AG04449 (cell line): ENCODE measurements at regions of chr11 and their contacts with region 1.

Region 1: GRCh38 chr11:10808553-10809372 is at the start of gene EIF4G2:
- DNase-seq: peak; percentile 86
- H3K4me3 ChIP-seq: peak within 1 kb of the TSS; percentile 90
- CTCF ChIP-seq: no peak

Region 2: DNA sequence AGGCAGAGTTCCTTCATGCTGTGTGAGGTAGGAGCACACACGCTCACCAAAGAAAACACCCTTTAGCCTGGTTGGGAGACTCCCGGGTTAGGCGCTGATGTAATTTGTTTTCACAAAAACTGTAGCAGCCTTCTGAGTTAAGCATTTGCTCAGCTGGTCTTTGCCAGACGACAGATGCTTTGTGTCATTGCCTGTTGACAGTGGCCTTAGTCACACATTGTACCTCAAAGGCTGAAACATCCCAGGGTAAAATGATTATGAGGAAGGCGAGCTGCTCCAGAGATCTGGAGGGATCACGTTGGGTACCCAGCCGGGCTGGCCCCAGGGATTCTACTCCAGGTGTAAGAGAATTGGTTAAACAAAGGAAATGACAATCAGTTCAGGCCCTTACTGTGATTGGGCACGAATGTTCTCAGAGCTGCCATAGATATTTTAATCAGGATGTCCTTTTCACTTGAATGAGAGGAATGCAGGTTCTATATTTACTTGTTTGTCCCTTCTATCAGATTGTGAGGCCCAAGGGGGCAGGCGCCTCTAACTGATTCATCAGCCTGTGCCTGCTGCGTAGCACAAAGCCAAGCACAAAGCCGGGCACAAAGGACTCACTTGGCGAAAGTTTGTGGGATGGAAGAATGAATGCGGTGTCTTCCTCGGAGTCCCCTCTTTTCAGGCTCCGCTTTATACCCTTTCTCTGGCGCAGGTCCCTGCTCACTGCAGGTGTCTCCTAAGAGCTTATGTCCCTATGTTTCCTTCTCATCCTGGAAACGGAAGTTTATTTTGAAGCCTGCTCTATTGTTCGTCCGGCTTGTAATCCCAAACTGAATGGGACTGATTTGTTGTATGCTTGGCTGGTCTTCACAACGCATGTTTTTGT is 456.8 kb before region 1 on chr11:
- CTCF ChIA-PET with region 1: no interaction called
- POLR2A ChIA-PET with region 1: no interaction called
- DNase-seq: peak; percentile 74
- H3K4me3 ChIP-seq: no peak overlapping the region
- CTCF ChIP-seq: no peak

Region 3: DNA sequence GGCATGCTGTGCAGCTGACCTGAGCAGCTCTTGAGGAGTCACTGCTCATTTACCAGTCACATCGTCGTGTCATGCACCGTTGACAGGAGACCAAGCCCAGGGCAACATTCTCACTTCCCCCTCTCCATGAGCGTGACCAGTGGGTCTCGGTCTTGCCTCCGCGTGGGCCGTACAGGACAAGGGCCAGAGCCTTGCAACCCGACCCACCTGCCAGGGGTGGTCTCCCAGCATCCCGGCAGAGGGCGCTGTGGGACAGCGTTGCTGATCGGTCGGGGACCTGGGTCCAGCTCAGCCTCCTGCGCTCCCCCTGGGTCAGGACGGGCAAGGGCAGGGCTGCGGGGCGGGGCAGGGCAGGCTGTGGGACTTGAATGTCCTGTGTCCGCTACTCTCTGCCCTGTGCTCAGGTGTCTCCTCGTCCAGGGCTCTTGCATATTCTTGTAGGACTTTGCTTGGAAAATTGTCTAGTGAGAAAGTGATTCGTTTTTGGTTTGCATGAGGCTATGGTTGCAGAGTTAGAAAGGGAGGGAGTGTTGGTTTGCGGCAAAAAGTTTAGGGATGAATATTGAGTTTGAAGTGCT is 16.3 kb before region 1 on chr11:
- CTCF ChIA-PET with region 1: interaction called, 61 read pairs
- POLR2A ChIA-PET with region 1: interaction called, 40 read pairs
- DNase-seq: no peak
- H3K4me3 ChIP-seq: no peak overlapping the region; the same call in 1 of the 2 replicates
- CTCF ChIP-seq: peak; percentile 99

Region 4: GRCh38 chr11:10844356-10844755 is 35.6 kb after region 1 on chr11:
- CTCF ChIA-PET with region 1: no interaction called
- POLR2A ChIA-PET with region 1: interaction called, 15 read pairs
- DNase-seq: no peak
- H3K4me3 ChIP-seq: no peak overlapping the region
- CTCF ChIP-seq: no peak

Region 5: DNA sequence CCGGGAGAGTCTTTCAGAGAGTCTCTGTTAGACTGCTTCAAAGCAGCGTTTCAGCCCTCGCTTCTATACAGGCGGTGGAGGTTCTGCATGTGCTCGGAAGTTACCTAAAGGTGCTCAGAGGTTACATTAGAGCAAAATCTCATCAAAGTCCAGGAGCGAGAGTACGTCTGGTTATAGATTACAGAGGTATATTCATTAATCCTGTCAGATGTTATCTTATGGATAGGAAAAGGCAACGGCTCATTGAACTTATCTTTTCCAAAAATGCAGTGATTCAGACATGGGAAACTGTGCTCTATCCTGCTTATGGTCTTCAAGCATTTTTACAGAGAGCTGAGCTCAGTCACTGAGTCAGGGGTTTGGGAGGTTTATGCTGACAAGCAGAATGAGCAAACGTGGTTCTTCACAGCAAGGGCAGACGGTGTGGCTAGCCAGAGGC is 58.1 kb after region 1 on chr11:
- CTCF ChIA-PET with region 1: no interaction called
- POLR2A ChIA-PET with region 1: interaction called, 10 read pairs
- DNase-seq: no peak
- H3K4me3 ChIP-seq: no peak overlapping the region
- CTCF ChIP-seq: no peak

Region 6: GRCh38 chr11:10906513-10906912 is 97.8 kb after region 1 on chr11:
- CTCF ChIA-PET with region 1: interaction called, 4 read pairs
- POLR2A ChIA-PET with region 1: interaction called, 86 read pairs
- DNase-seq: no peak
- H3K4me3 ChIP-seq: no peak overlapping the region
- CTCF ChIP-seq: peak; percentile 15

Region 7: DNA sequence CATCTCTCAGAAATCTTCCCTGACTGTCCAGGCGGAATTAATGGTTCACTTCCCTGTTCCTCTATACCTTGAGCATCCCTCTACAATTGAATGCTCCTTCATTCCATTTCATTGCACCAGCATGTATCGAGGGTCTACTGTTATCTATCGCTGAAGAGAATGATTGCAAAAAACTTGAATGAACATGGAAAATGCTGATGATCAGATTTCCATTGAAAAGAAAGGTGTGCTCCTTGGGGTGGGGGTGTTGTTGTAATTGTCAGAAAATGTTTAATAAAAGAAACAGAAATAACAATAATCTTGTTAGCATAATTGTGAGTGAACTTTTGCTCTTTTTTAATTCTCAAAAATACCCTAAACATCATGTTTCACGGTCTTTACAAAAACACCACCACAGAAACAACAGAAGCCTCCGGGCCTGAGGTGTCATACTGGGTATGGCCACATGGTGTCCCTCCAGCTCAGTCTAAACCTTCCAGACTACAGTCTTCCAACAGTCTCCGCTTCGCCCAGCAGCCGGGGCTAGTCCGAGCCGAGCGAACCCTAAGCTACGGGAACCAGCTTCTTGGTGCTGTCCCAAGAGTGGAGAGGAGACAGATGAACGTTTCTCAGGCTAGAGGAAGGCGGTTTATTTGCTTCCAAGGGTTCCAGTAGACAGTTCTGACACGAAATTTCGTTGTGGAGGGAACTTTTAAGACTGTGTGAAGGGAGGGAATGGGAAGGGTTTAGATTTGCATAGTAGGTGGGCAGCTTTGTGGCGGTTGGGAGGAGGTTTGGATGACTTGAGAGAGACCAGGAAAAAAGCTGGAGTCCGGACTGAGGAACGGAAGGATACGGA is 124.9 kb after region 1 on chr11:
- CTCF ChIA-PET with region 1: interaction called, 8 read pairs
- POLR2A ChIA-PET with region 1: interaction called, 54 read pairs
- DNase-seq: peak; percentile 73
- H3K4me3 ChIP-seq: peak overlapping the region; percentile 58
- CTCF ChIP-seq: peak; percentile 90

Region 8: DNA sequence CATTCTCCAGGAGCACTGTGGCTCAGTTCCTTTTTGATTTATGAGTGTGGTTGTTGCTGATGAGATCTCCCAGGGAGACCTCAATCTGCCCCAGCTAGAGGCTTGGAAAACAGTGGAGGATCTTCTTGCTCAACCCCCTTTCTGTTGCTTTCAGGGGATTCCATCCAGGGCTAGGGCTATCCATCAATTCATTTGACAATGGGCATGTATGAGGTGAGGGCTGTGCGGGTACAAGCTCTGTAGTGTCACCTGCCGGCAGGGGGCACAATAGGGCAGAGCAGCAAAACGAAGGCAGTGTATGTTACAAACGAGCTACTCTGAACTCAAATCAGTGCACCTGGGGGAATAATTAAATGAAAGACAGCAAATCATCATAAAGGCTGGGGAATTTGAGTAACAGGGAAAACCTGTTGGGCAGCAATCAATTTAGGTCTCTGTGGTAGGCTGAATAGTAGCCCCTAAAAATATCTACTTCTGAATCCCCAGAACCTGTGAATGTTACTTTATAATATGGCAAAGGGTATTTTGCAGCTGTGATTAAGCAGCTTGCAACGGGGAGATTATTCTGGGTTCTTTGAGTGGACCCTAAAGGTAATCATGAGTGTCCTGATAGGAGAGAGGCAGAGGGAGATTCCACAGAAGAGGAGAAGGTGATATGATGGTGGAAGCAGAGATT is 219.4 kb after region 1 on chr11:
- CTCF ChIA-PET with region 1: interaction called, 5 read pairs
- POLR2A ChIA-PET with region 1: interaction called, 20 read pairs
- DNase-seq: no peak
- H3K4me3 ChIP-seq: no peak overlapping the region
- CTCF ChIP-seq: peak; percentile 68

Region 9: GRCh38 chr11:11078344-11079086 is 269.8 kb after region 1 on chr11:
- CTCF ChIA-PET with region 1: no interaction called
- POLR2A ChIA-PET with region 1: no interaction called
- DNase-seq: no peak
- H3K4me3 ChIP-seq: no peak overlapping the region
- CTCF ChIP-seq: no peak